PC-9 (cell line): ENCODE measurements at regions of chr4 and their contacts with region 1.

Region 1: DNA sequence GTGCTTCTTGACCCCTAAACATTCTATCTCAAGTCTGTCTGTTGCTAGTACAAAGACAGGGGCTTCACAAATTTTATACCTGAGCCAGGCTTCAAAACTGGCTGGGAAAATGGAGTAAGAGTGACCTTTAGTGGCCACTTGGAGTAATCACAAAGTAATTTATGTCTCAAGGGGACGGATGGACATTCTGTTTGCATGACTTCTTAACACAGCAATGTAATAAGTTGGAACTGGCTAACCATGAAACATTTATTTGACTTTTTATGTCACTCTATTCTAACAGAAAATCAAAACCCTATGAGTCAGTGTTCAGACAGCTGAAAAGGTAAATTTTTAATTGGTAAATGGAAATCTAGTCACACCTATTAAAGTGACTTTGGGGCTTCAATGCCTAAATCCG is 600.6 kb downstream of the ANKRD50 start:
- DNase-seq: peak in 1 of 2 experiments; percentile 64
- H3K4me3 ChIP-seq: no peak overlapping the region
- H3K27ac ChIP-seq: no peak overlapping the region
- H3K4me1 ChIP-seq: no peaks in the 10 kb centered on the region
- H3K27me3 ChIP-seq: no peaks in the 10 kb centered on the region
- CTCF ChIP-seq: peak; percentile 91

Region 2: GRCh38 chr4:123102897-123103471 is 1008.9 kb before region 1 on chr4:
- CTCF ChIA-PET with region 1: no interaction called
- POLR2A ChIA-PET with region 1: no interaction called
- intact Hi-C with region 1: loop called (anchors 2 kb)
- DNase-seq: peak in 1 of 2 experiments; percentile 38
- H3K4me3 ChIP-seq: no peak overlapping the region
- H3K27ac ChIP-seq: no peak overlapping the region
- H3K4me1 ChIP-seq: no peaks in the 10 kb centered on the region
- H3K27me3 ChIP-seq: no peaks in the 10 kb centered on the region
- CTCF ChIP-seq: peak; percentile 92

Region 3: GRCh38 chr4:123350191-123350544 is 761.8 kb before region 1 on chr4:
- CTCF ChIA-PET with region 1: no interaction called
- POLR2A ChIA-PET with region 1: no interaction called
- intact Hi-C with region 1: loop called (anchors 5 kb)
- DNase-seq: peak in 1 of 2 experiments; percentile 40
- H3K4me3 ChIP-seq: no peak overlapping the region
- H3K27ac ChIP-seq: no peak overlapping the region
- H3K4me1 ChIP-seq: no peaks in the 10 kb centered on the region
- H3K27me3 ChIP-seq: no peaks in the 10 kb centered on the region
- CTCF ChIP-seq: peak; percentile 44; the same call in 1 of the 2 replicates

Region 4: DNA sequence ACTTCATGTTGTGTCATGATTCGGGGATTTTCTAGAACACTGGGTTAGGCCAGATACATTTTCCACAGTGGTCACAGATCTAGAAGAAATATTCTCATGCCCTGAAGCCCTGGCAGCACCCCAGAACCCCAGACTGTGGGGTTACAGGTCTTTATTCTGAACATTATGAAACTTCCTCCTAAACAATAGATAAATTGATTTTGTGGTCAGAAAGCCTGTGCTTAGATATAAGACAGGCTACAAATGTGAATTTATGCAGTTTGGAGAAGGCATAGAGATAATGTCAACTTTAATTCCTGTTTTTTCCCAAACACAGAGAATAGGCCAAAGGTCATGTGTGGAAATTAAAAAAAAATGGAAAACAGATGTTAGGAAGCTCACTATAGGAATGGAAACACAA is 222.4 kb before region 1 on chr4:
- CTCF ChIA-PET with region 1: no interaction called
- POLR2A ChIA-PET with region 1: no interaction called
- intact Hi-C with region 1: no loop called
- DNase-seq: no peak
- H3K4me3 ChIP-seq: no peak overlapping the region
- H3K27ac ChIP-seq: no peak overlapping the region
- H3K4me1 ChIP-seq: no peaks in the 10 kb centered on the region
- H3K27me3 ChIP-seq: no peaks in the 10 kb centered on the region
- CTCF ChIP-seq: no peak

Region 5: GRCh38 chr4:124262211-124263179 is 150.6 kb after region 1 on chr4:
- CTCF ChIA-PET with region 1: no interaction called
- POLR2A ChIA-PET with region 1: no interaction called
- intact Hi-C with region 1: loop called (anchors 5 kb)
- DNase-seq: peak; percentile 57 to 71
- H3K4me3 ChIP-seq: no peak overlapping the region
- H3K27ac ChIP-seq: no peak overlapping the region
- H3K4me1 ChIP-seq: no peaks in the 10 kb centered on the region
- H3K27me3 ChIP-seq: no peaks in the 10 kb centered on the region
- CTCF ChIP-seq: peak; percentile 95

Region 6: GRCh38 chr4:125283707-125284279 is 1171.9 kb after region 1 on chr4:
- CTCF ChIA-PET with region 1: no interaction called
- POLR2A ChIA-PET with region 1: no interaction called
- intact Hi-C with region 1: loop called (anchors 10 kb)
- DNase-seq: peak in 1 of 2 experiments; percentile 60
- H3K4me3 ChIP-seq: no peak overlapping the region
- H3K27ac ChIP-seq: no peak overlapping the region
- H3K4me1 ChIP-seq: no peaks in the 10 kb centered on the region
- H3K27me3 ChIP-seq: no peaks in the 10 kb centered on the region
- CTCF ChIP-seq: peak; percentile 89